Activated CD4-positive, alpha-beta T cell treated with anti-CD3 and anti-CD28 coated beads, Interleukin-2, amount 10 ng/mL, durations not matched to agents 24 days and 14 days (primary cell): ENCODE measurements at regions of chr17 and their contacts with region 1.

Region 1: GRCh38 chr17:7306911-7307686 is at the start of gene EIF5A:
- DNase-seq: peak; percentile 100
- H3K4me3 Mint-ChIP-seq: peak within 1 kb of the TSS; percentile 90
- H3K27ac Mint-ChIP-seq: peak within 1 kb of the TSS; percentile 99
- H3K4me1 Mint-ChIP-seq: peaks cover 40% of the 10 kb centered on the region
- H3K27me3 Mint-ChIP-seq: peaks cover 5% of the 10 kb centered on the region
- total RNA-seq, gene EIF5A: 1,303 and 1,327 TPM in 2 replicates

Region 2: GRCh38 chr17:7214300-7215135 is 92.6 kb before region 1 on chr17:
- intact Hi-C with region 1: loop called (anchors 2 kb)
- DNase-seq: peak; percentile 100
- H3K4me3 Mint-ChIP-seq: peak overlapping the region; percentile 96
- H3K27ac Mint-ChIP-seq: peak overlapping the region; percentile 99
- H3K4me1 Mint-ChIP-seq: peaks cover 56% of the 10 kb centered on the region
- H3K27me3 Mint-ChIP-seq: peaks cover 18% of the 10 kb centered on the region

Region 3: DNA sequence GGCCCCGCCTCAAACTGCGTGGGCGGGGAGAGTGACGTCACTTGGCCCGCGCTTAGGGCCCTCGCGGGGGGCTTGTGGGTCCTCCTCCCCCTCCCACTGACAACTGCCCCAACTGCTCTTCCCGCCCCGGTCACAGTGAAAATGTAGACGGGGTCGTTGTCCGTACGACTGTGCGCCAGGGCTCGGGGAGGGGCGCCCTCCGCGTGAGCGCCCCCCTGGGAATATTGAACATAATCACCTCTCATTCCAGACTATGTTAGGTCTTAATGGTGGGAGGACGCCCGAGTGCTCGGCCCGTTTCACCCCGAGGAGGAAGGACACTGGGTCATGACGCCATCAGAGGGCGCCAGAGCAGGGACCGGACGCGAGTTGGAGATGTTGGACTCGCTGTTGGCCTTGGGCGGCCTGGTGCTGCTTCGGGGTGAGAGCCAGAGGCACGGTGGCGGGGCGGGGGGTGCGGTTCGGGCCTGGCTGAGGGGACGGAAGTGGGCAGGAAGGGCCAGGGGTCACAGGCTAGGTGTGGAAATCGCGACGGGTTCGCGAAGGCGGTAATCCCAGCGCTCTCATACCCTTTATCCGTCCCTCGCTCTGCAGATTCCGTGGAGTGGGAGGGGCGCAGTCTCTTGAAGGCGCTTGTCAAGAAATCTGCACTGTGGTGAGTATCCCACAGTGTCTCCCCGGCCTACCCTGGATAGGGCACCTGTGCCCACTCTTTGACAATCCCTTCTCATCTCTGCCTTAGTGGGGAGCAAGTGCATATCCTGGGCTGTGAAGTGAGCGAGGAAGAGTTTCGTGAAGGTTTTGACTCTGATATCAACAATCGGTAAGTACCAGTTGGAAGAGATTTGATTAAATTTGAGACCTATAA is 54.7 kb before region 1 on chr17 and contains the start of gene ELP5:
- intact Hi-C with region 1: loop called (anchors 1 kb)
- DNase-seq: peak; percentile 97
- H3K4me3 Mint-ChIP-seq: peak within 1 kb of the TSS; percentile 95
- H3K27ac Mint-ChIP-seq: peak within 1 kb of the TSS; percentile 100
- H3K4me1 Mint-ChIP-seq: peaks cover 45% of the 10 kb centered on the region
- H3K27me3 Mint-ChIP-seq: no peaks in the 10 kb centered on the region
- total RNA-seq, gene ELP5: 74.3 and 76.8 TPM in 2 replicates

Region 4: GRCh38 chr17:7294614-7295153 is 12.4 kb before region 1 on chr17 and contains the start of gene YBX2:
- intact Hi-C with region 1: no loop called
- DNase-seq: peak; percentile 93
- H3K4me3 Mint-ChIP-seq: peak within 1 kb of the TSS; percentile 77
- H3K27ac Mint-ChIP-seq: peak within 1 kb of the TSS; percentile 56
- H3K4me1 Mint-ChIP-seq: peaks cover 15% of the 10 kb centered on the region
- H3K27me3 Mint-ChIP-seq: peaks cover 45% of the 10 kb centered on the region
- total RNA-seq, gene YBX2: 0.21 and 0.33 TPM in 2 replicates

Region 5: DNA sequence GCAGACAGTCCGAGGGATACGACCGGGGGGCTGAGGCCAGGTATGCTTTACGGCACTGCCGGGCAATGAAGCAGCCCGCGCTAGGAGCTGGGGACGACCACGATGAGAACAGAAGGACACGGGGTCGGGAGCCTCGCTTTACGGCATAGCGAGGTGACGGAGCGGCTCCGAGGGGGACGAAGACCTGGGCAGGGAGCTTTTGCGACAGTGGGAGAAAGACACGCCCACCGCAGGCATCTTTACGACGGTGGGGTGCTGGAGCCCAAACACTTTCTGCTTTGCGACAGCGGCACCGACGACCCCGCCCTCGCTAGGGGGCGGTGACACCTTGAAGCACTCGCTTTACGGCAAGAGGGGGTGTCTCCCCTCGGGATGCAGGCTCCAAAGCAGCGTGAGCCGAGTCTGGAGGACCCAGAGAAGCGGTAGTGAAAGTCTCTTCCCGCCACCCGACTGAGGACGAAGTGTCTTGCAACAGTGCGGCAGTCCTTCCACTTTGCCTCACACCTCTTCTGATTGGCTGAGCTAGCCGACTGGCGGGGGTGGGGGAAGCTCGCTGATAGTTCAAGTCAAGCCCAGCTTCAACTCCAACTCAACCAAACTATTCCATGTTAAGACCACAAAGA is 22.4 kb after region 1 on chr17:
- intact Hi-C with region 1: loop called (anchors 1 kb)
- DNase-seq: peak; percentile 99
- H3K4me3 Mint-ChIP-seq: peak overlapping the region; percentile 91
- H3K27ac Mint-ChIP-seq: peak overlapping the region; percentile 91
- H3K4me1 Mint-ChIP-seq: peaks cover 38% of the 10 kb centered on the region
- H3K27me3 Mint-ChIP-seq: no peaks in the 10 kb centered on the region

Region 6: GRCh38 chr17:7583253-7584109 is 276.4 kb after region 1 on chr17 and contains the start of gene MPDU1:
- intact Hi-C with region 1: loop called (anchors 2 kb)
- DNase-seq: peak; percentile 99
- H3K4me3 Mint-ChIP-seq: peak within 1 kb of the TSS; percentile 89
- H3K27ac Mint-ChIP-seq: peak within 1 kb of the TSS; percentile 99
- H3K4me1 Mint-ChIP-seq: peaks cover 46% of the 10 kb centered on the region
- H3K27me3 Mint-ChIP-seq: no peaks in the 10 kb centered on the region
- total RNA-seq, gene MPDU1: 92.5 and 104 TPM in 2 replicates